Esophagus muscularis mucosa (tissue), 4 donors: ENCODE measurements at regions of chr10 and their contacts with region 1.

Region 1: GRCh38 chr10:99248824-99249223 is 13.2 kb upstream of the HPSE2 start:
- DNase-seq: no peak
- H3K4me3 ChIP-seq: no peak overlapping the region
- H3K27ac ChIP-seq: no peak overlapping the region
- H3K4me1 ChIP-seq: peaks cover 0 to 18% (median 7%) of the 10 kb centered on the region in 4 donors
- H3K27me3 ChIP-seq: no peaks in the 10 kb centered on the region
- CTCF ChIP-seq: no peak
- EP300 ChIP-seq: no peak
- POLR2A ChIP-seq: no peak

Region 2: DNA sequence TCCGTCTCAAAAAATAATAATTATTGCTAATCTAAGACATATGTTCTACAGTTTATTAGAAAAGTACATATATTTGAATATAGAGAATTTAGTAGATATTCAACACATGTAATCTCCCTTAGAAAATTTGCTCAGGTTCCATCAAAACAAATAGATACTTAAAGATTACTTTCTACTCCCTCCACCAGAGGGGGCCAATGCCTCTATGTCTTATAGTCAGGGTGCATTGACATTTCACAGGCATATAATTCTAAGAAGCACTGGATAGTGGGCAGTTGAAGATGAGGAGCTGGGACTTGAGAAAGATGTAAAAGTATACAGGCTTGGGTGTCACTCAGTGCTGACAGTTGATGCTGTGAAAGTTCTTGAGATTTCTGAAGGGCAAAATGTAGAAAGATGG is 500.5 kb before region 1 on chr10:
- intact Hi-C with region 1: loop called (anchors 5 kb)
- DNase-seq: no peak
- H3K4me3 ChIP-seq: no peak overlapping the region
- H3K27ac ChIP-seq: no peak overlapping the region
- H3K4me1 ChIP-seq: no peaks in the 10 kb centered on the region
- H3K27me3 ChIP-seq: no peaks in the 10 kb centered on the region
- CTCF ChIP-seq: peak; percentile 41 to 53 (median 49)
- EP300 ChIP-seq: no peak
- POLR2A ChIP-seq: no peak

Region 3: DNA sequence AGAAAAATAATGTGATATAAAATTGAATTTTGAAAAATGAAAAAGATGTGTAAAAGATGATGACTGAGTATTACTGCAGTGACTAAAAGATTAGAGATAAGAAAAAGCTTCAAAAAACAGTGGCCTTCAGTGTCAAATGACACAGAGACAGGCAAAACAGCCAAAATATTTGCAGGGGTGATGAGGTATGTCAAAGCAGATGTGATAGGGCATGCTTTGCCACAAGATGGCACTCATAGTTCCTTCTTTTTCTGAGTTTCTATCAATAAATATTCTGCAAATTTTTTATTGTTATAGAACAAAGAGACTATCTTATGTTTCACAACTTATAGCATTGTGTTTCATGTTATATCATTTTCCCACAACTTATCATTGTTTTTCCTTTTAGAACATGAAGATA is 458.0 kb before region 1 on chr10:
- intact Hi-C with region 1: loop called (anchors 5 kb)
- DNase-seq: no peak
- H3K4me3 ChIP-seq: no peak overlapping the region
- H3K27ac ChIP-seq: no peak overlapping the region
- H3K4me1 ChIP-seq: peaks cover 0 to 15% (median 5%) of the 10 kb centered on the region in 4 donors
- H3K27me3 ChIP-seq: no peaks in the 10 kb centered on the region
- CTCF ChIP-seq: peak; percentile 47 to 59 (median 59)
- EP300 ChIP-seq: no peak
- POLR2A ChIP-seq: no peak